GM12878 (cell line): ENCODE measurements at regions of chr14 and their contacts with region 1.

Region 1: DNA sequence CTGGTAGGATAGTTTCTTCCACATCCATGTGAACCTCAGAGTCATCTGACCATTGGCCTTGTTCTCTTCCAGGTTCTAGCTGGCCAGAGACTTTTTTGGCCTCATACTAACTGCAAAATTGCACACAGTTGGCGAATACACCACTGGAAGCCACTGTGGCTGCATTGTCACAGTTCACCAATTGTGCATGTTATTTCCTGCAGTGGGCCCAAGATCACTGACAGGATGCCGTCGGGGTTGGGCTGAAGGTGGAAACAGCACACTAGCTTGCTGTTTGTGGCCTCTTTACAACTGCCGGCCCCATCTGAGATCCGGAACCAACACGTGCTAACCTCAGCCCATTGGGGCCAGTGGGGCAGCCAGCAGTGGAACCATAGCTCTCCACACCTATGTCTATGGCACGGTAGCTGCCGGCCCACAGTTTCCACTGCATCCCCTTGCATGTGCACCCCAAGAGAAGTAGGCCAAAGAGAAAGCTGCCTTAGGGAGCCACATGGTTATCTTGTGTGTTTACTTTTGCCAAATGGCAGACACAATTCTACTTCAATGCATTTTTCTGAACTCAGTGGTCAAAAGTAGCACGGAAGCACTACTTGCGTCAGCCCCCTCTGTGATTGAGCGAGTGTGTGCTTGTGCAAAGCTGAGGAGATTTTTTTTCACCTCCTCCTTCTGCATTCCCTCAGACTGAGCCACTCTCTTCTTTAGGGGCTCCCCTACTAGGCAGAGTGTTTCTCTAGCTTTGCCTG is 464.0 kb downstream of the RAD51B start:
- DNase-seq: peak; percentile 95
- ATAC-seq: peak; percentile 57
- H3K4me3 ChIP-seq: no peak overlapping the region
- H3K27ac ChIP-seq: peak overlapping the region; percentile 92
- H3K4me1 ChIP-seq: peaks cover 89% of the 10 kb centered on the region
- H3K27me3 ChIP-seq: no peaks in the 10 kb centered on the region
- CTCF ChIP-seq: no peak
- EP300 ChIP-seq: peak; percentile 68 to 84
- POLR2A ChIP-seq: peak; percentile 78
- RAD21 ChIP-seq: peak; percentile 20; the same call in 1 of the 2 replicates

Region 2: DNA sequence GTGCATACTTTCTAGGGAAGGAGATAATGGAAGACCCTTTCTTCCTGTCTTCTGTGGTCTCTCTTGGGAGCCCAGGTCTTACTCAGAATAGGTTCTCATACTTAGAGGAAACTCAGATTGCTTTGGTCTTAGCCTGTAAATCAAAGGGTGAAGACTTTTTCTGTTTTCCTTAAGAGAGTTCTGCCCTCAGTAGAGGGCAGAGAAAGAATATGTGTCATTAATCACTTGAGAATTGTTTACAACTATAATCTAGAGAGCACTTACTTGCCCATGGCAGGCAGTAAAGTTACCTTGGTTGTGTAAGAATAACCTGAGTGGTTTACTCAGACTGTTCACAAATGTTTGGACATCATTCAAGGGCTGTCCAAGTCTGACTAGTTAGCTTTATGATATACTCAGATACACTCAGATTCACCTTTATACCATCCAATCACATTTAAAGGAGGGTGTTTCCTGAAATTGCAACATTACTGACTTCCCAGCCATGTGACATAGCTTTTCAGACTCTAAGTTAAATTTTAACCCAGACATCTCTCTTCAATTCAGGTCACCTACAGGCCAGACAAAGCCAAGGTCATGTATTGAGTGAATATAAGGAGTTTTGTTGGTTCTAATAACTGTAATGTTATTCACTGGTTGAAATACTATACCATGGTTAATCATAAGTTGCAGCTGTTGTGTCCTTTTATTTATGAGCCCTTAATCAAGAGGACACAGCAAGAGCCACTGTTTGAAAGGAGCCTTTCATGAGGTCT is 91.8 kb before region 1 on chr14:
- CTCF ChIA-PET with region 1: no interaction called
- POLR2A ChIA-PET with region 1: no interaction called
- RAD21 ChIA-PET with region 1: no interaction called
- SMC1A ChIA-PET with region 1: no interaction called
- in situ Hi-C with region 1: no loop called
- intact Hi-C with region 1: no loop called
- DNase-seq: no peak
- ATAC-seq: peak; percentile 48
- H3K4me3 ChIP-seq: no peak overlapping the region
- H3K27ac ChIP-seq: no peak overlapping the region
- H3K4me1 ChIP-seq: no peaks in the 10 kb centered on the region
- H3K27me3 ChIP-seq: no peaks in the 10 kb centered on the region
- CTCF ChIP-seq: no peak
- EP300 ChIP-seq: no peak
- POLR2A ChIP-seq: no peak
- RAD21 ChIP-seq: no peak

Region 3: GRCh38 chr14:68210729-68211299 is 72.7 kb before region 1 on chr14:
- CTCF ChIA-PET with region 1: no interaction called
- POLR2A ChIA-PET with region 1: no interaction called
- RAD21 ChIA-PET with region 1: interaction called, 3 read pairs
- SMC1A ChIA-PET with region 1: interaction called, 5 read pairs
- in situ Hi-C with region 1: no loop called
- intact Hi-C with region 1: loop called (anchors 2 kb)
- DNase-seq: peak; percentile 100
- ATAC-seq: peak; percentile 93
- H3K4me3 ChIP-seq: peak overlapping the region; percentile 22; the same call in 1 of the 2 replicates
- H3K27ac ChIP-seq: peak overlapping the region; percentile 86
- H3K4me1 ChIP-seq: peaks cover 58% of the 10 kb centered on the region
- H3K27me3 ChIP-seq: no peaks in the 10 kb centered on the region
- CTCF ChIP-seq: no peak
- EP300 ChIP-seq: peak; percentile 68 to 81
- POLR2A ChIP-seq: no peak
- RAD21 ChIP-seq: 0 out of 2 replicates have a peak, but pooled peaks have one; percentile 17

Region 4: GRCh38 chr14:68268197-68268596 is 15.4 kb before region 1 on chr14:
- CTCF ChIA-PET with region 1: interaction called, 7 read pairs
- POLR2A ChIA-PET with region 1: interaction called, 6 read pairs
- RAD21 ChIA-PET with region 1: interaction called, 69 read pairs
- SMC1A ChIA-PET with region 1: interaction called, 106 read pairs
- in situ Hi-C with region 1: no loop called
- intact Hi-C with region 1: loop called (anchors 1 kb)
- DNase-seq: peak; percentile 93
- ATAC-seq: peak; percentile 84
- H3K4me3 ChIP-seq: no peak overlapping the region
- H3K27ac ChIP-seq: peak overlapping the region; percentile 84
- H3K4me1 ChIP-seq: peaks cover 73% of the 10 kb centered on the region
- H3K27me3 ChIP-seq: no peaks in the 10 kb centered on the region
- CTCF ChIP-seq: no peak
- EP300 ChIP-seq: peak; percentile 93 to 100; a peak in 3 of 4 replicates
- POLR2A ChIP-seq: no peak
- RAD21 ChIP-seq: peak; percentile 22

Region 5: GRCh38 chr14:68312884-68313610 is 29.5 kb after region 1 on chr14:
- CTCF ChIA-PET with region 1: interaction called, 73 read pairs
- POLR2A ChIA-PET with region 1: interaction called, 141 read pairs
- RAD21 ChIA-PET with region 1: interaction called, 343 read pairs
- SMC1A ChIA-PET with region 1: interaction called, 321 read pairs
- in situ Hi-C with region 1: no loop called
- intact Hi-C with region 1: no loop called
- DNase-seq: peak; percentile 99
- ATAC-seq: peak; percentile 89
- H3K4me3 ChIP-seq: no peak overlapping the region; the same call in 1 of the 2 replicates
- H3K27ac ChIP-seq: peak overlapping the region; percentile 91
- H3K4me1 ChIP-seq: peaks cover 64% of the 10 kb centered on the region
- H3K27me3 ChIP-seq: no peaks in the 10 kb centered on the region
- CTCF ChIP-seq: no peak
- EP300 ChIP-seq: peak; percentile 88 to 97; a peak in 3 of 4 replicates
- POLR2A ChIP-seq: peak; percentile 49; the same call in 1 of the 2 replicates
- RAD21 ChIP-seq: peak; percentile 41

Region 6: GRCh38 chr14:68369281-68370056 is 85.9 kb after region 1 on chr14:
- CTCF ChIA-PET with region 1: interaction called, 5 read pairs
- POLR2A ChIA-PET with region 1: interaction called, 72 read pairs
- RAD21 ChIA-PET with region 1: interaction called, 58 read pairs
- SMC1A ChIA-PET with region 1: no interaction called
- in situ Hi-C with region 1: no loop called
- intact Hi-C with region 1: no loop called
- DNase-seq: peak; percentile 85
- ATAC-seq: peak; percentile 83
- H3K4me3 ChIP-seq: peak overlapping the region; percentile 24; the same call in 1 of the 2 replicates
- H3K27ac ChIP-seq: peak overlapping the region; percentile 94
- H3K4me1 ChIP-seq: peaks cover 55% of the 10 kb centered on the region
- H3K27me3 ChIP-seq: no peaks in the 10 kb centered on the region
- CTCF ChIP-seq: no peak
- EP300 ChIP-seq: no peak
- POLR2A ChIP-seq: no peak
- RAD21 ChIP-seq: 0 out of 2 replicates have a peak, but pooled peaks have one; percentile 20

Region 7: GRCh38 chr14:68506021-68506644 is 222.6 kb after region 1 on chr14:
- CTCF ChIA-PET with region 1: no interaction called
- POLR2A ChIA-PET with region 1: no interaction called
- RAD21 ChIA-PET with region 1: interaction called, 4 read pairs
- SMC1A ChIA-PET with region 1: interaction called, 4 read pairs
- in situ Hi-C with region 1: no loop called
- intact Hi-C with region 1: loop called (anchors 5 kb)
- DNase-seq: no peak
- ATAC-seq: peak; percentile 32
- H3K4me3 ChIP-seq: peak overlapping the region; percentile 21
- H3K27ac ChIP-seq: peak overlapping the region; percentile 76
- H3K4me1 ChIP-seq: peaks cover 31% of the 10 kb centered on the region
- H3K27me3 ChIP-seq: no peaks in the 10 kb centered on the region
- CTCF ChIP-seq: no peak
- EP300 ChIP-seq: no peak
- POLR2A ChIP-seq: no peak
- RAD21 ChIP-seq: no peak

Region 8: DNA sequence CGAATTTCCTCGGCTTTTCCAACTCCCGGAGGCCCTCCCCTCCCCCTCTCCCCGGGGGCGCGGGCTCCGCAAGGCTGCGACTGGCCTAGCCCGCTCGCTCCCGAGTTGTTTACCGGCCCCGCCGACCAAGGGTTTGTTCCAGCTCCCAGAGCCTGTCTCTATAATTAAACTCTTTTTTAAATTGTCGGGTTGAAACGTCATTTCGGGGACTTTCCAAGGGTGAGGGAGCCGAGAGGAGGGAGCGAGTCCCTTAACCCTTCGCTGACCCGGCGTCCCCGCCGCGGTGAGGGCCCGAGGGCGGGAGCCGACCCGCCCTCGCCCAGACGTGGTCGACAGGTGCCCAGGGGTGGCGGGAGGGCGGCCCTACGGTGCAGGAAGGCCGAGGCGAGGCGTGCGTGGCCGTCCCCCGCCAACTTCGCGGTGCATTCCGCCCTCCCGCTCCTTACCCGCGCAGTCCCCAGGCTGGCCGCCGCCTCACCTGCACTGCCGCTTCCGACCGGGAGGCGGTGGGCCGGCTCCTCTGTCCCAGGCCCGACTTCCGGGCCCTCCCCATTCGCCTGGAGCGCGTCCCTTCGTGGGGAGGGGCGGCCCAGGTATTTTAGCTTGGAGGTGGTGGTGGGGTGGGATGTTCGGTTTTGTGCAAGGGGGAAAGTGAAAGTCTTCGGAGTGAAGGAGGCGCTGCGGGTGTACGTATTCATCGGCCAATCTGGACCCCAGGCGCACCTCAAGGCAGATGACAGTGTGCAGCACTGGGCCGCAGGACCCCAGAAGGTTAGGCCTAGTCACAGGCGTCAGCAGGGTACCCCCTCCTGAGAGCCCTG is 512.3 kb after region 1 on chr14:
- CTCF ChIA-PET with region 1: no interaction called
- POLR2A ChIA-PET with region 1: interaction called, 5 read pairs
- RAD21 ChIA-PET with region 1: interaction called, 14 read pairs
- SMC1A ChIA-PET with region 1: no interaction called
- in situ Hi-C with region 1: loop called (anchors 10 kb)
- intact Hi-C with region 1: no loop called
- DNase-seq: no peak
- ATAC-seq: peak; percentile 62
- H3K4me3 ChIP-seq: peak overlapping the region; percentile 97
- H3K27ac ChIP-seq: peak overlapping the region; percentile 100
- H3K4me1 ChIP-seq: peaks cover 18% of the 10 kb centered on the region
- H3K27me3 ChIP-seq: no peaks in the 10 kb centered on the region
- CTCF ChIP-seq: peak; percentile 46 to 74 (median 59); a peak in 5 of 6 replicates
- EP300 ChIP-seq: peak in 1 of 2 experiments; percentile 62; a peak in 3 of 4 replicates
- POLR2A ChIP-seq: peak; percentile 97
- RAD21 ChIP-seq: peak; percentile 43; the same call in 1 of the 2 replicates